ENCODE measurements at regions of chr10 and their contacts with region 1.

Region 1: GRCh38 chr10:21495752-21496342 is 29.6 kb downstream of the SKIDA1 start:
- DNase-seq: peak; percentile 94
- ATAC-seq: peak; percentile 53
- H3K4me3 Mint-ChIP-seq: peak overlapping the region; percentile 82
- H3K27ac Mint-ChIP-seq: peak overlapping the region; percentile 91
- H3K4me1 Mint-ChIP-seq: peaks cover 59% of the 10 kb centered on the region
- H3K27me3 Mint-ChIP-seq: peaks cover 37% of the 10 kb centered on the region
- CTCF ChIP-seq: peak; percentile 99

Region 2: GRCh38 chr10:20970708-20971107 is 525.1 kb before region 1 on chr10:
- CTCF ChIA-PET with region 1: no interaction called
- POLR2A ChIA-PET with region 1: no interaction called
- DNase-seq: no peak
- ATAC-seq: no peak
- H3K4me3 Mint-ChIP-seq: no peak overlapping the region
- H3K27ac Mint-ChIP-seq: no peak overlapping the region
- H3K4me1 Mint-ChIP-seq: 0 out of 2 replicates have a peak, but pooled peaks cover under 1% of the 10 kb centered on the region
- H3K27me3 Mint-ChIP-seq: no peaks in the 10 kb centered on the region
- CTCF ChIP-seq: no peak

Region 3: DNA sequence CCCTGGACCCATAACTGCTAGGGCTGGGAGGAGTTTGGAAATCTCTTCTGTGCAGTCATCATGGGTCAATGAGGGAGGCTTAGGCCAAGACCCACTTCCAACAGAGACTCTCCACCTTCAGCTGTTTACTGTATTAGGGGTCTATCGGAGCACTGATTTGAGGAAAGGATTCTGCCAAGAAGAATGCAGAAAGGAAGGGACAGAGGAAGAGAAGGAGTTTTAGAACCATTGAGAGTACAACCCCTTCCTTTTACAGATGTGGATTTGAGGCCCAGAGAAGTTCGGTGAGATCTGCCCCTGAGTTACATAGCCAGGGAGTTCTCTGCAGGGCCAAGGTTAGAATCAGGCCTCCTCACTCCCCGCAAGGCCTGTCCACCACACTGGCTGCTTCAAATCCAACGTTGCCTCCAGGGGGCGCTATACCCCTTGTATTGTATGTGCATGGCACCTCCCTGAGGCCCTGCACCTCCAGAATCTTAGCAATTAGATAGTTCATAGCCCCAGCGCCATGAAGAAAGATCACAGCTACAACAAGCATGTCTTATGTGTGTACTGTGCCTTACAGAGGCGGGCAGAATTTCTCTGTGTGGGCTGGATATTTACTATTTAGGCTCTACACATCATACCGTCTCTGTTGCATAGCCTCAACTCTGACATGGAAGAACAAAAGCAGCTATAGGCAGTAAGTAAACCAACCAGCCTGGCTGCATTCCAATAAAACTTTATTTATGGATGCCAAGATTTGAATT is 217.2 kb before region 1 on chr10:
- CTCF ChIA-PET with region 1: interaction called, 35 read pairs
- POLR2A ChIA-PET with region 1: interaction called, 8 read pairs
- DNase-seq: peak; percentile 98
- ATAC-seq: peak; percentile 80
- H3K4me3 Mint-ChIP-seq: no peak overlapping the region
- H3K27ac Mint-ChIP-seq: peak overlapping the region; percentile 49; the same call in 1 of the 2 replicates
- H3K4me1 Mint-ChIP-seq: peaks cover 49% of the 10 kb centered on the region
- H3K27me3 Mint-ChIP-seq: no peaks in the 10 kb centered on the region
- CTCF ChIP-seq: peak; percentile 97

Region 4: DNA sequence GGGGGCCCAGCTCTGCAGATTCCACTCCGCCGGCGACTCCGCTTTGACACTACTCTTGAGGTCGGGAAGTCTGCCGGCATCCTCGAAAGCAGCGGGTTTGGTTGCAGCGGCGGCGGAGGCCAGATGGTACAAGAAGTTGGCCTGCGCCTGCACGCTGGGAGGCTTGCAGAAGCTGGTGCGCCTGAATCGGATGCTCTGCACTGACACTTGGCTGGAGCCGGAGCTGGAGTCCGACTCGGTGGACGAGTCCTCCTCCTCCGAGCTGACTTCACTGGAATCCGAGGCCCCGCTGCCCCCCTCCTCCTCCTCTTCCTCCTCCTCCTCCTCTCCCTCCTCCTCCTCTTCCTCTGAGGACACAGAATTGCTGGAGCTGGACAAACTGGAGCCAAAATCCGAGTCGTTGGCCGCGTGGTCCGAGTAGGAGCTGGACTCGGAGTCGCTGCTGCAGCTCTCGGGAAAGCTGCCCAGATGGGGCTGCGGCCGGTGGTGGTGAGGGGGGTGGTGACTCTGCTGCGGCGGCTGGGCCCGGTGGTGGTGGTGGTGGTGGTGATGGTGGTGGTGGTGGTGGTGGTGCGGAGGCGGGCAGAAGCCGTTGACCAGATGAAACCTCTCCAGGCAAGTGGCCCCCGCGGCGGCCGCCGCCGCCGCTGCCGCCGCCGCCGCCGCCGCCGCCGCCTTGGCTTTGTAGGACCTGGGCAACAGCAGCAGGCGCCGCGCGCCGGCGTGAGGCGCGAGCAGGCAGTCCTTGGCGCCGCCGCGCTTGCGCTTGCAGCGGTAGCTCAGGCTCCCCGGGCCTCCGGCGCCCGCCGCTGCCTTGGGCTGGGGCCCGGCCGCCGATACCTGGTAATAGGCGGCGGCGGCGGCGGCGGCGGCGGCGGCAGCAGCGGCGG is 20.6 kb after region 1 on chr10:
- CTCF ChIA-PET with region 1: interaction called, 15 read pairs
- POLR2A ChIA-PET with region 1: interaction called, 28 read pairs
- DNase-seq: peak; percentile 69
- ATAC-seq: peak; percentile 15
- H3K4me3 Mint-ChIP-seq: peak overlapping the region; percentile 88
- H3K27ac Mint-ChIP-seq: peak overlapping the region; percentile 69; the same call in 1 of the 2 replicates
- H3K4me1 Mint-ChIP-seq: peaks cover 78% of the 10 kb centered on the region
- H3K27me3 Mint-ChIP-seq: peaks cover 32% of the 10 kb centered on the region
- CTCF ChIP-seq: no peak

Region 5: DNA sequence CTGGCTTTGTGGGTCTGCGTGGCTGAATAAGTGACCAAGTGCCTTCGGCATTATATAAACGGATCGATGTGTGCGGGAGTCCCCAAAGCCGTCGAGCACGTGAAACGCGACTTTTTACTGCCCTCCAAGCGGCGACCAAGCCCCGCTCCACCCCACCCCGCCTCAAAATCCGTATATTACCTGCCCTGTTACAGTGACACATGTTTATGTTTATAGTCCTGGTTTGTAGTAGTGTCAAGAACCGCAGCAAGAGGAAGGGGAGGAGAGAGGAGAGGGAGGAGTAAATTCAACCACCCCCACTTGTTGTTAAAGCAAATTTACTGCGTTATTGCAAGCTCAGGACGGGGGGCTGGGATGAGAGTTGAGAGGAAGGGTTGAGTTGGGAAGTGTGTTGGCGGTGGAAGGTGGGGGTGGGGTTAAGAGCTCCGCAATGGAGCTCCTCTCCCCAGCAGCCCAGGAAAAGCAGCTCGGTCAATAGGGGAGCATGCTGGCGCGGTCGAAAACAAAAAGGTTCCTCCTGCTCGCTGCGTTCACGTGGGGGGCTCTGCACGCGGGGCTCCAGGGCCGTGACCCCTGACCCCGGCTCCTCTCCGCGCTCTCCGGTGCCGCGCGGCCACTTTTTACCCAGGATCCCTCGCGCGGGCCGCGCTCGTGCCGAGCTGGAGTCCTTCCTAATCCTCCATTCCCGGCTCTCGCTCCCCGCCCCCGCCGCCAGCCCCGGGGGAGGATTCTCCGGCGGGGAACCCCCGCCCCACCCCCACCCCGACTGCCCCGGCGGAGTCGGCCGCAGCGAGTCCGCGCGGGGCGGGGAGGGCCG is 29.7 kb after region 1 on chr10 and contains the start of gene SKIDA1:
- CTCF ChIA-PET with region 1: interaction called, 35 read pairs
- POLR2A ChIA-PET with region 1: interaction called, 61 read pairs
- DNase-seq: peak; percentile 88
- ATAC-seq: peak; percentile 66
- H3K4me3 Mint-ChIP-seq: peak within 1 kb of the TSS; percentile 86
- H3K27ac Mint-ChIP-seq: peak within 1 kb of the TSS; percentile 99
- H3K4me1 Mint-ChIP-seq: peaks cover 53% of the 10 kb centered on the region
- H3K27me3 Mint-ChIP-seq: peaks cover 2% of the 10 kb centered on the region; the same call in 1 of the 2 replicates
- CTCF ChIP-seq: no peak
- total RNA-seq, gene SKIDA1: 9.4 to 12.9 TPM (median 11.8 TPM) in 3 replicates

Region 6: DNA sequence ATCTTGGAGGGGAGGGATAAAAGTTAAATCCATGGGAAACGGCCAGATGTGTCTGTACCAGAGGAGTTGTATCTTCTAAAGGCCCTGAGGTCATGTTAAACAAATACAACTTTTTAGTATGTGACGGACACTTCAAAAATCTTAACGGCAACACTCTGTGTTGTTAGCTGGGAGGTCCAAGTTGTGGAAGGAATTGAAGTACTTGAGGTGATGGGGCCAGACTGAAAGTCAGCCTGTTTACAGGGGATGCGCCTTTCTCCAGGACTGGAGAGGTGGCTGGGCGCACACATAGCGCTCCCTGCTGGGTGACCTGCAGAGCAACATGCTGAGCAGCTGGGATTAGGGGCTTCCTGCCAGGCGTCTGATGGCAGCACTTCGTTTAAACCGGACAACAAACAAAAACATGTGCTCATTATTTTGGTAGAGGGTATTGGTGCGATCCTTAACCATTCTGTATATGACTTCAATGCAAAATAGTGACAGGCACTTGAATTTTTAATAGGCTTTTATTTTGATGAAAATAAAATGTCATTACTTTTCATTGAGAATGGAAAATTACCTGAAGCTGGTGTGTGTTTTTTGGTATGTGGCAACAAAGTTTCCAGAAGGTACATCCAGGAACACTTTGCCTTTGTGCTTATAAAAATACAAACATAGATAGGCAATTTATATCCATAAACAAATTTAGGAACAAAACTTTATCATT is 236.4 kb after region 1 on chr10:
- CTCF ChIA-PET with region 1: interaction called, 35 read pairs
- POLR2A ChIA-PET with region 1: interaction called, 8 read pairs
- DNase-seq: peak; percentile 79
- ATAC-seq: peak; percentile 95
- H3K4me3 Mint-ChIP-seq: no peak overlapping the region
- H3K27ac Mint-ChIP-seq: peak overlapping the region; percentile 89
- H3K4me1 Mint-ChIP-seq: peaks cover 37% of the 10 kb centered on the region
- H3K27me3 Mint-ChIP-seq: no peaks in the 10 kb centered on the region
- CTCF ChIP-seq: peak; percentile 87

Measured in WTC11 (cell line).